Activated B cell treated with CpG ODN at 0.5 μM for 24 hours (primary cell): ENCODE measurements at regions of chr6 and their contacts with region 1.

Region 1: DNA sequence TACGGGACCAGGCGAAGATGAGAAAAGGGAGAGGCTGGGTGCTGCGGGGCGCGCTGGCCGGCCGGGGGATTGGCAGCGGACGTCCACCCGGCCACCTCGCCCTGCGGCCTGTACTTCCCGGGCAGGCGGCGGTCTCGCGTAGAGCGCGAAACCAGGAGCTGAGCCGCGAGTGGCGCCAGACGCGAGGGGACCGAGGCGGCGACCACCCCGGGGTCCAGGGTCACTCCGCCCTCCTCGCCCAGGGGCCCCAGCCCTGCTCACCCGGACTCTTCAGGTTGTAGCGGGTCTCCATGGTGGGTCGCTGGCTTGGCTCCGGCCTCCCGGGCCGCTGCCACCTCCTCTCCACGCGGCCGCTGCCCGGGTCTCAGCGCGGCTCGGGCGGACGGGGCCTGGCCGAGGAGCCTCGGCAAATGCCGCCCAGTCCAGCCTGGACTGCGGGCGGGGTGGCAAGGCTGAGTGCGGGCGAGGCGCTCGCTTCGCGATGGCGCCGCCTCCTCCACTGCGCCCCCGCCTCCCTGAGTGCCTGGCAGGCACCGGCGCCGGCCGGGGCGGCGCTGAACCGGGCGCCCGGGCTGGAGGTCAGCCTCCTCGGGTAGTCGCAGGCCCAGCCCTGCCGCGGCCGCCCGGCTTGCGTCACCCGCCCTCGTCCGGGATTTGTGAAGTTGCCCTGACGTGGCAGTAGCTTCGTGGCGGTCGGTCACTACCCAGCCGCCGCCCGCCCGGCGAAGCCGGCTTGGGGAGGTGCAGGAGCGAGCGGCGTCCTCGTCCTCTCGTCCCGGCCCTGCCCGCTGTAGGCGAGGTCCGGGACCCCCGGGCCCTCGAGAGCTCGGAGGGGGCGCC is at the start of gene UBE2J1:
- DNase-seq: peak; percentile 83
- ATAC-seq: peak; percentile 77
- H3K4me3 Mint-ChIP-seq: peak within 1 kb of the TSS; percentile 94
- H3K27ac Mint-ChIP-seq: peak within 1 kb of the TSS; percentile 94
- H3K4me1 Mint-ChIP-seq: peaks cover 86% of the 10 kb centered on the region
- H3K27me3 Mint-ChIP-seq: no peaks in the 10 kb centered on the region
- CTCF ChIP-seq: no peak
- total RNA-seq, gene UBE2J1: 32.3 and 32.8 TPM in 2 replicates

Region 2: DNA sequence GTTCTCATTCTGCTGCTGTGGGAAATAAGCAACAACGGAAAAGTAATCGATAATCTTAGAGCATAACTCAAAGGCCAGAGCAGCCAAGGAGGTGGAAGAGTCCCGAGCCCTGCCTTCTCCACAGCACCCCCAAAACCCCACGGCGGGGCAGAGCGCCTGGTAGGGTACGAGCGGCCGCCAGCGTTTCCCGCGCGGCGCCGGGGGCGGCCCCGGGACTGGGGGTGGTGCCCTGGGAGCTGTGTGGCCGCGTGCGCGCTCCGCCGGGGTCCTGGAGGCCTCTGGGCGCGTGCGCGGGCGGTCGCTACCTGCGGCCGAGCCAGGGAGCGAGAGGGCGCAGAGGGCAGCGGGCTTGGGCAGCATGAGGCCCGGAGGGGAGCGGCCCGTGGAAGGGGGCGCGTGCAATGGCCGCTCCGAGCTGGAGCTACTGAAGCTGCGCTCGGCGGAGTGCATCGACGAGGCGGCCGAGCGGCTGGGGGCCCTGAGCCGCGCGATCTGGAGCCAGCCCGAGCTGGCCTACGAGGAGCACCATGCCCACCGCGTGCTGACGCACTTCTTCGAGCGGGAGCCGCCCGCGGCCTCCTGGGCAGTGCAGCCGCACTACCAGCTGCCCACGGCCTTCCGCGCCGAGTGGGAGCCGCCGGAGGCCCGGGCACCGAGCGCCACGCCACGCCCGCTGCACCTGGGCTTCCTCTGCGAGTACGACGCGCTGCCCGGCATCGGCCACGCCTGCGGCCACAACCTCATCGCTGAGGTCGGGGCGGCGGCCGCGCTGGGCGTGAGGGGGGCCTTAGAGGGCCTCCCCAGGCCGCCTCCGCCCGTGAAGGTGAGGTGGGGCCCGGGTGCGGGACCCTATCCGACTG is 206.5 kb before region 1 on chr6 and contains the start of gene PM20D2:
- CTCF ChIA-PET with region 1: no interaction called
- POLR2A ChIA-PET with region 1: interaction called, 34 read pairs
- intact Hi-C with region 1: loop called (anchors 1 kb)
- DNase-seq: peak; percentile 72
- ATAC-seq: peak; percentile 78
- H3K4me3 Mint-ChIP-seq: peak within 1 kb of the TSS; percentile 90
- H3K27ac Mint-ChIP-seq: peak within 1 kb of the TSS; percentile 92
- H3K4me1 Mint-ChIP-seq: peaks cover 22% of the 10 kb centered on the region
- H3K27me3 Mint-ChIP-seq: no peaks in the 10 kb centered on the region
- CTCF ChIP-seq: no peak
- total RNA-seq, gene PM20D2: 10.9 and 11.6 TPM in 2 replicates

Region 3: GRCh38 chr6:89387516-89388222 is 35.2 kb after region 1 on chr6:
- CTCF ChIA-PET with region 1: no interaction called
- POLR2A ChIA-PET with region 1: interaction called, 14 read pairs
- intact Hi-C with region 1: no loop called
- DNase-seq: no peak
- ATAC-seq: peak; percentile 87
- H3K4me3 Mint-ChIP-seq: peak overlapping the region; percentile 60
- H3K27ac Mint-ChIP-seq: peak overlapping the region; percentile 33
- H3K4me1 Mint-ChIP-seq: peaks cover 15% of the 10 kb centered on the region
- H3K27me3 Mint-ChIP-seq: peaks cover 4% of the 10 kb centered on the region
- CTCF ChIP-seq: no peak

Region 4: DNA sequence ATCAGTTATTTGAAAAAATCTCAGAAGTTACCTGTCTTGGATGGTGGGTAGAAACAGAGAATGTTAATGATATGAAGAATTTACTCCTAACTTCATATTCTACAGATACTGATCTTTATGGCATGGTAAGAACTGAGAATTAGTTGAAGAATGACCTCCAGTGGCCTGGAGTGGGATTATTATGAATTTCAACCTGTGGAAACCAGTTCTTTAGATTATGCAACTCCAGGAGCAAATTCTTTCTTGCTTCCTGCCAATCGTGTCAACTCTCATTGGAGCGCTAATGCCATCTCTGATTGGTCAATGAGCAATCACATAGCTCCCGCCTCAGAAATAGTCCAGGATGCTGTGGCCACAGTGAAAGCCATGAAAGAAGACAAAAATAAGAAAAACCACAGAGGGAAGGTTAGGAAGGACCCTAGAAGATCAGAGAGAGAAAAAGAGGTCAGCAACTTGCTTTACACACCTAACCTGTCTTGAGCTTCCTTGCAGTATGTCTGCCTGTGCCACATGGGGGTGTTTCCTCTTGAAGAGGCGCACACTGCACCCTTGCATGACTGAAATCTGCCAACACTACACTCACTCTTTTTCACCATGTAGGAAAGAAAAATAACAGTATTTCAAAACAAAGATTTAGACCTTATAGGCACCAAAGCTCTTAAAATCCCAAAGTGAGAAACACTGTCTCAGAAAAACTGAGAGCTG is 245.6 kb after region 1 on chr6:
- CTCF ChIA-PET with region 1: no interaction called
- POLR2A ChIA-PET with region 1: no interaction called
- intact Hi-C with region 1: loop called (anchors 2 kb)
- DNase-seq: no peak
- ATAC-seq: no peak
- H3K4me3 Mint-ChIP-seq: no peak overlapping the region
- H3K27ac Mint-ChIP-seq: no peak overlapping the region
- H3K4me1 Mint-ChIP-seq: peaks cover 30% of the 10 kb centered on the region
- H3K27me3 Mint-ChIP-seq: no peaks in the 10 kb centered on the region
- CTCF ChIP-seq: no peak

Region 5: GRCh38 chr6:89829591-89830385 is 477.3 kb after region 1 on chr6 and contains the start of gene CASP8AP2:
- CTCF ChIA-PET with region 1: no interaction called
- POLR2A ChIA-PET with region 1: interaction called, 5 read pairs
- intact Hi-C with region 1: loop called (anchors 5 kb)
- DNase-seq: peak; percentile 76
- ATAC-seq: peak; percentile 93
- H3K4me3 Mint-ChIP-seq: peak within 1 kb of the TSS; percentile 99
- H3K27ac Mint-ChIP-seq: peak within 1 kb of the TSS; percentile 96
- H3K4me1 Mint-ChIP-seq: peaks cover 37% of the 10 kb centered on the region
- H3K27me3 Mint-ChIP-seq: no peaks in the 10 kb centered on the region
- CTCF ChIP-seq: no peak
- total RNA-seq, gene CASP8AP2: 17.1 and 17.8 TPM in 2 replicates

Region 6: DNA sequence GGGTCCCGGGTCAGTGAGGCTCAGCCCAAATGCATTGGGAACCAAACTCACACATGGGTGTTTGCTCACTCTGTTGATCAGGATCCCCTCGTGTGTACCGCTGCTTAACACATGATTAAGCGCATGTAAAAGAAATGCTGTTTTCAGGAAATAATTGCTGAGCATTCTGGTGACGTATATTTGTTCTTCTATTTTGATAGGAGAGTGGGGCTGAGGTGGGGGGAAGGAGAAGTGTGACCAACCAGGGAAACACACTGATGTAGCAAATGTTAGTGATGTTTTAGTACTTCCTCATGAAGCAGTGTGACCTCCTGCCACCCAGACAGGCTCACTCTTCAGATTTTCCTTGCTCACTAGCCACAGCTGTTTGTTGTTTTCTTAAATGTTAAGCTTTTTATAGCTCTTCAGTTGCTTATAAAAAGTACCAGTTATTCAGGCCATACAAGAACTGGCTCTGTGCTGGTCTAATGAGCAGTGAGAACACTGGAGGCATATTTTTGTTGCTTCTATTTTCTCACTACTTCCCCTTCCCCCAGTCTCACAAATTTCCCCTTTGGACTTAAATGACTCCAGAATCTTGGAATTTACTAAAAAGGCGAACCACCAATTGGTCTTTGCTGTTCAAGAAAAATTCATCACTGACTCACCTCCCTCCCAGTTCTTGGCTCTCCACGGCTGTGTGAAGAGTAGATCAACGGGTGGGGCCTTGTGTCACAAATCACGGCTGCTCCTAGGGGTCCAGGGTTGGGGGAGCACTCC is 1023.4 kb after region 1 on chr6:
- CTCF ChIA-PET with region 1: no interaction called
- POLR2A ChIA-PET with region 1: no interaction called
- intact Hi-C with region 1: loop called (anchors 10 kb)
- DNase-seq: peak; percentile 43
- ATAC-seq: peak; percentile 95
- H3K4me3 Mint-ChIP-seq: peak overlapping the region; percentile 50
- H3K27ac Mint-ChIP-seq: peak overlapping the region; percentile 94
- H3K4me1 Mint-ChIP-seq: peaks cover 72% of the 10 kb centered on the region
- H3K27me3 Mint-ChIP-seq: no peaks in the 10 kb centered on the region
- CTCF ChIP-seq: no peak